ENCODE measurements at regions of chr15 and their contacts with region 1.

Region 1: GRCh38 chr15:55434989-55435825 is 26.9 kb downstream of the PIERCE2 start:
- DNase-seq: peak; percentile 68
- H3K4me3 ChIP-seq: no peak overlapping the region; a peak in 1 of 4 replicates
- H3K27ac ChIP-seq: no peak overlapping the region
- H3K4me1 ChIP-seq: no peaks in the 10 kb centered on the region
- H3K27me3 ChIP-seq: no peaks in the 10 kb centered on the region
- CTCF ChIP-seq: peak; percentile 75
- EP300 ChIP-seq: no peak
- RAD21 ChIP-seq: peak; percentile 78

Region 2: DNA sequence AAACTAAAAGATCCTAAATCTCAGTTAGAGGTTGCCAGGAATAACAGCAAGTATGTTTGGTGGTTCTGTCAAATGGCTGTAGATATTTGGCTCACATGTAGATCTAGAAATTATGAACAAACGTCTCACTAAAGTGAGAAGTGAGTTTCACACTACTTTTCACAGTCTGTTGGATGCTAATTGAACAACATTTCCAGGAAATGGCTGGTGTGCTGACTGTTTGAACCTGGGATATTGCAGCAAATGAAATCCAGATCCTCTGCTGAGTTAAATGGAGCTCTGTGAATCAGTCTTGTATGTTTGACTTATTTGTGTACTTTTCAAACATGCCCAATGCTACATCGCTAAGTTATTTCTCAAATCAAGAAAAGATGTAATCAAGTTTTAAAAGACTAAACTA is 217.2 kb before region 1 on chr15:
- CTCF ChIA-PET with region 1: interaction called, 12 read pairs
- POLR2A ChIA-PET with region 1: no interaction called
- DNase-seq: peak; percentile 44
- H3K4me3 ChIP-seq: no peak overlapping the region
- H3K27ac ChIP-seq: peak overlapping the region; percentile 8 to 95; a peak in 3 of 4 replicates
- H3K4me1 ChIP-seq: peaks cover 0 to 6% of the 10 kb centered on the region in 2 experiments; a peak in 2 of 4 replicates
- H3K27me3 ChIP-seq: no peaks in the 10 kb centered on the region
- CTCF ChIP-seq: no peak
- EP300 ChIP-seq: peak in 1 of 2 experiments; percentile 68; a peak in 2 of 4 replicates
- RAD21 ChIP-seq: no peak

Region 3: DNA sequence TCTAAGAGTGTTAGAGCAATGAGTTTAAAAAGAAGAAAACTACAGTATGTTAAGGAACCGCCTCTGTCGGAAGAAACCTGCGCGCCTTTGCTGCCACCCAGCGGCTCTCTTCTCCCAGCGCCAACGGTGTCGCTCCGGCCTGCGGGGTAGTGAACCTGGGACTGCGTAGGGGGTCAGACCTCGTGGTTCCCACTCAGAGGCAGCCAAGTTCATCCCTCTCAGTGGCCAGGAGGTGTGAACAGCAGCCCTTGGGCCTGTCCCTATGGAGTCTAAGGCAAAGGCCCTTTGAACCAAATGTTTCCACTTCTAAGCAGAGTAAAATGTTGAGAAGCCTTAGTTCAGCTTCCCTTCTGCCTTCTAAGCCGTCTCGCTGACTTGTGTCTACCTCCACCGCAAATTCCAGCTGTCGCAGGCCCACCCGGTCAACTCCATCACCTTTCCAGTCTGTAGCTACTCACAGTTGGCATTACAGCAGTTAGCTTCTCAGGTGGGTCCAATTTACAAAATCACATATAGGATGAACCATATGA is 144.6 kb before region 1 on chr15:
- CTCF ChIA-PET with region 1: interaction called, 10 read pairs
- POLR2A ChIA-PET with region 1: no interaction called
- DNase-seq: peak; percentile 91
- H3K4me3 ChIP-seq: peak overlapping the region; percentile 74 to 87
- H3K27ac ChIP-seq: peak overlapping the region; percentile 71 to 88
- H3K4me1 ChIP-seq: peaks cover 0 to 8% of the 10 kb centered on the region in 2 experiments; a peak in 1 of 4 replicates
- H3K27me3 ChIP-seq: no peaks in the 10 kb centered on the region
- CTCF ChIP-seq: peak; percentile 95
- EP300 ChIP-seq: no peak
- RAD21 ChIP-seq: peak; percentile 94

Region 4: GRCh38 chr15:55407949-55408791 is 27.0 kb before region 1 on chr15 and contains the starts of genes CCPG1 and PIERCE2:
- CTCF ChIA-PET with region 1: interaction called, 19 read pairs
- POLR2A ChIA-PET with region 1: no interaction called
- DNase-seq: peak; percentile 94
- H3K4me3 ChIP-seq: peak within 1 kb of the TSS; percentile 77 to 78
- H3K27ac ChIP-seq: peak within 1 kb of the TSS; percentile 84 to 86
- H3K4me1 ChIP-seq: peaks cover 7 to 16% of the 10 kb centered on the region in 2 experiments; a peak in 2 of 4 replicates
- H3K27me3 ChIP-seq: no peaks in the 10 kb centered on the region
- CTCF ChIP-seq: peak; percentile 55
- EP300 ChIP-seq: peak in 1 of 2 experiments; percentile 6; a peak in 1 of 4 replicates
- RAD21 ChIP-seq: no peak
- polyA plus RNA-seq, gene CCPG1: 10.5 and 16.9 TPM in 2 replicates
- polyA plus RNA-seq, gene PIERCE2: 2.5 and 2.9 TPM in 2 replicates

Region 5: GRCh38 chr15:55420171-55420866 is 14.9 kb before region 1 on chr15:
- CTCF ChIA-PET with region 1: interaction called, 10 read pairs
- POLR2A ChIA-PET with region 1: interaction called, 3 read pairs
- DNase-seq: no peak
- H3K4me3 ChIP-seq: no peak overlapping the region
- H3K27ac ChIP-seq: 0 out of 4 replicates have a peak overlapping the region, but pooled peaks of 1 of the 2 experiments have one; percentile 17
- H3K4me1 ChIP-seq: no peaks in the 10 kb centered on the region
- H3K27me3 ChIP-seq: no peaks in the 10 kb centered on the region
- CTCF ChIP-seq: no peak
- EP300 ChIP-seq: no peak
- RAD21 ChIP-seq: no peak

Measured in SK-N-SH (cell line).